ENCODE measurements at regions of chr2 and their contacts with region 1.

Region 1: GRCh38 chr2:172253190-172254052 is 150.7 kb upstream of the DLX2 start:
- DNase-seq: peak; percentile 99
- H3K4me3 ChIP-seq: no peak overlapping the region
- H3K27ac ChIP-seq: peak overlapping the region; percentile 95
- H3K4me1 ChIP-seq: peaks cover 54% of the 10 kb centered on the region
- H3K27me3 ChIP-seq: no peaks in the 10 kb centered on the region
- CTCF ChIP-seq: no peak
- POLR2A ChIP-seq: peak; percentile 68

Region 2: DNA sequence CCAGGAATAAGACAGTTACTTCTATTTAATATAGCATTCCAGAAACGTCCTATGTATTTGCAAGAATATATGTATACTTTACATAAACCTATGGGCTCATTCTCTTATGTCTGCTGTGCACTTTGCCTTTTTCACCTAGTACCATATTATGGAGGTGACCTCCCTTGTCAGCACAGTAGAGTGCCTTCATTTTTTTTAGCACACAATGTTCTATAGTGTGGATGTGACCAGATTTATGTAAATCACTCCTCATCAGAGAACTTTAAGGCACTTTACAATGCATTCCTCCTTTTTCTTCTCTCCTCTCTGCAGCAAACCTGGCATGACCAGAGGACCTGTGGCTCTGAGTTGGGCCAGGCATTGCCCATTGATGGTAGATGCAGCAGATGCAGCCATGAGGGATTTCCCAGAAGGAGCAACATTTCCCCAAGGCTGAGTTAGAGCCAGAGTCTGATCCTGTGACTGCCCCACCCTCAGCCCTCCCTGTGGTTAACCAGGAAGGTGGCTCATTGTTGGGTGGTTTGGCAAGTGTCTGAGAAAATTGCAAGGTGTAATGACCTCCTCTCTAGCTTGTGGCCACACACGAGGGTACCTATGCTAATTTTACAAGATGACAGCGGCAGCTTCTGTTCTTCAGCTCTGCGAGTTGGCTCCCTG is 74.2 kb before region 1 on chr2:
- CTCF ChIA-PET with region 1: interaction called, 8 read pairs
- POLR2A ChIA-PET with region 1: no interaction called
- dilution Hi-C with region 1: no loop called
- intact Hi-C with region 1: loop called (anchors 5 kb)
- DNase-seq: no peak
- H3K4me3 ChIP-seq: no peak overlapping the region
- H3K27ac ChIP-seq: no peak overlapping the region
- H3K4me1 ChIP-seq: peaks cover 7% of the 10 kb centered on the region
- H3K27me3 ChIP-seq: no peaks in the 10 kb centered on the region
- CTCF ChIP-seq: no peak
- POLR2A ChIP-seq: no peak

Region 3: GRCh38 chr2:172200495-172201085 is 52.8 kb before region 1 on chr2:
- CTCF ChIA-PET with region 1: interaction called, 3 read pairs
- POLR2A ChIA-PET with region 1: no interaction called
- dilution Hi-C with region 1: no loop called
- intact Hi-C with region 1: loop called (anchors 2 kb)
- DNase-seq: peak; percentile 53
- H3K4me3 ChIP-seq: no peak overlapping the region
- H3K27ac ChIP-seq: no peak overlapping the region
- H3K4me1 ChIP-seq: no peaks in the 10 kb centered on the region
- H3K27me3 ChIP-seq: no peaks in the 10 kb centered on the region
- CTCF ChIP-seq: peak; percentile 42 to 47
- POLR2A ChIP-seq: no peak

Region 4: GRCh38 chr2:172234716-172235691 is 18.4 kb before region 1 on chr2:
- CTCF ChIA-PET with region 1: interaction called, 9 read pairs
- POLR2A ChIA-PET with region 1: no interaction called
- dilution Hi-C with region 1: no loop called
- intact Hi-C with region 1: loop called (anchors 1 kb)
- DNase-seq: peak; percentile 45
- H3K4me3 ChIP-seq: peak overlapping the region; percentile 27 to 57 (median 57)
- H3K27ac ChIP-seq: no peak overlapping the region
- H3K4me1 ChIP-seq: peaks cover 31% of the 10 kb centered on the region
- H3K27me3 ChIP-seq: no peaks in the 10 kb centered on the region
- CTCF ChIP-seq: peak in 1 of 2 donors; percentile 26
- POLR2A ChIP-seq: no peak

Region 5: GRCh38 chr2:172307800-172308199 is 54.4 kb after region 1 on chr2:
- CTCF ChIA-PET with region 1: interaction called, 7 read pairs
- POLR2A ChIA-PET with region 1: interaction called, 4 read pairs
- dilution Hi-C with region 1: no loop called
- intact Hi-C with region 1: loop called (anchors 1 kb)
- DNase-seq: peak; percentile 94
- H3K4me3 ChIP-seq: no peak overlapping the region
- H3K27ac ChIP-seq: peak overlapping the region; percentile 88
- H3K4me1 ChIP-seq: peaks cover 31% of the 10 kb centered on the region
- H3K27me3 ChIP-seq: no peaks in the 10 kb centered on the region
- CTCF ChIP-seq: no peak
- POLR2A ChIP-seq: no peak

Region 6: GRCh38 chr2:172361360-172361759 is 107.9 kb after region 1 on chr2:
- CTCF ChIA-PET with region 1: no interaction called
- POLR2A ChIA-PET with region 1: no interaction called
- dilution Hi-C with region 1: no loop called
- intact Hi-C with region 1: no loop called
- DNase-seq: no peak
- H3K4me3 ChIP-seq: no peak overlapping the region
- H3K27ac ChIP-seq: no peak overlapping the region
- H3K4me1 ChIP-seq: no peaks in the 10 kb centered on the region
- H3K27me3 ChIP-seq: no peaks in the 10 kb centered on the region
- CTCF ChIP-seq: no peak
- POLR2A ChIP-seq: no peak

Region 7: GRCh38 chr2:173037245-173038120 is 784.1 kb after region 1 on chr2:
- CTCF ChIA-PET with region 1: no interaction called
- POLR2A ChIA-PET with region 1: no interaction called
- dilution Hi-C with region 1: no loop called
- intact Hi-C with region 1: no loop called
- DNase-seq: peak; percentile 41
- H3K4me3 ChIP-seq: no peak overlapping the region
- H3K27ac ChIP-seq: no peak overlapping the region
- H3K4me1 ChIP-seq: no peaks in the 10 kb centered on the region
- H3K27me3 ChIP-seq: no peaks in the 10 kb centered on the region
- CTCF ChIP-seq: no peak
- POLR2A ChIP-seq: no peak

Measured in endothelial cell of umbilical vein (primary cell).